Activated B cell treated with CpG ODN at 0.5 μM for 24 hours (primary cell): ENCODE measurements at regions of chrX and their contacts with region 1.

Region 1: DNA sequence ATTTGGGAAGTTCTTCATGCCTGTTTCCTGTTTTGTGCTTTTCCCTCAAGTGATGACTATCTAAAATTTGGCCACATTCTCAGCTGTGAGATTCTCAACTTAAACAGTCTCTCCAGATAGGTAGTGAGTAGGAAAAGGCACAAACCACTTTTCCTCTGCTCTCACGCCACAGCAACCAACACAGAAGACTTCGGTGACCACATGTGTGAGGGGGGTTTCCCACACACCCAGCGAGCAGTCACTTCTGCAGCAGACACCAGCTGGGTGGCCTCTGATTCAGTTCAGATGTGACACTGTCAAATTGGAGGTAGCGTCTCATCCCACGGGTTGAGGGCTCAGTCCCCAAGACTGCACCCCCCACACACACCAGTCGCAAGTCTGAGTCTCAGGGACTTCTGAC is 25.1 kb upstream of the CLDN34 start:
- DNase-seq: peak; percentile 26
- ATAC-seq: peak; percentile 84
- H3K4me3 Mint-ChIP-seq: peak overlapping the region; percentile 56
- H3K27ac Mint-ChIP-seq: peak overlapping the region; percentile 25
- H3K4me1 Mint-ChIP-seq: peaks cover 29% of the 10 kb centered on the region
- H3K27me3 Mint-ChIP-seq: no peaks in the 10 kb centered on the region
- CTCF ChIP-seq: no peak

Region 2: DNA sequence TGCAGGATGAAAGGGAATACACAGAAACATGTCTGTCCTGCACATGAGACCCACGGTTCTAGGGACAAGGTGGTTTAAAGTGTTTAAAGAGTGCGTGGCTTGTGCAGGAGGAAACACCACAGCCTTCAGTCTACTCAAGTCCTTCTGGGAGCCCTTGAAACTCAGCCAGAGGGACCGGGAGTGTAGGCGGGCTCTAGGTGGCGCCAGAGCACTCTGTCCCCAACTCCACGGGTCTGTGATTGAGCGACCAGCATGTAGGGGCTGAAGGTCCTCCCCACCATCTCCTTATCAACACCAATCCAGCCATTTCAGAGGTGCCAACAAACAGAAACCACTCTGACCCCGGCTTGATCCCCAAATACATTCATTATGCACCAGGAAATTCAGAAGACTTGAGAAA is 56.9 kb before region 1 on chrX:
- CTCF ChIA-PET with region 1: no interaction called
- POLR2A ChIA-PET with region 1: no interaction called
- intact Hi-C with region 1: loop called (anchors 5 kb)
- DNase-seq: peak; percentile 35
- ATAC-seq: peak; percentile 85
- H3K4me3 Mint-ChIP-seq: no peak overlapping the region
- H3K27ac Mint-ChIP-seq: no peak overlapping the region
- H3K4me1 Mint-ChIP-seq: peaks cover 2% of the 10 kb centered on the region
- H3K27me3 Mint-ChIP-seq: peaks cover 3% of the 10 kb centered on the region
- CTCF ChIP-seq: no peak

Region 3: DNA sequence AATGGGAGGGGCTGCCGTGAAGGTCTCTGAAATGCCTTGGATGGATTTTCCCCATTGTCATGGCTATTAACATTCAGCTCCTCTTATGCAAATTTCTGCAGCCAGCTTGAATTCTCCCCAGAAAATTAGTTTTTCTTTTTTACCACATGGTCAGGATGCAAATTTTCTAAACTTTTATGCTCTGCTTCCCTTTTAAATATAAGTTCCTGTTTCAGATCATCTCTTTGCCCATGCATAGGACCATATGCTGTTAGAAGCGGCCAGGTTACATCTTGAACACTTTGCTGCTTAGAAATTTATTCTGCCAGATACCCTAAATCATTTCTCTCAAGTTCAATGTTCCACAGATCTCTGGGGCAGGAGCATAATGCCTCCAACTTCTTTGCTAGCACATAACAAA is 11.3 kb after region 1 on chrX:
- CTCF ChIA-PET with region 1: no interaction called
- POLR2A ChIA-PET with region 1: interaction called, 3 read pairs
- intact Hi-C with region 1: loop called (anchors 1 kb)
- DNase-seq: no peak
- ATAC-seq: peak; percentile 45
- H3K4me3 Mint-ChIP-seq: no peak overlapping the region
- H3K27ac Mint-ChIP-seq: no peak overlapping the region
- H3K4me1 Mint-ChIP-seq: peaks cover 9% of the 10 kb centered on the region
- H3K27me3 Mint-ChIP-seq: no peaks in the 10 kb centered on the region
- CTCF ChIP-seq: no peak

Region 4: DNA sequence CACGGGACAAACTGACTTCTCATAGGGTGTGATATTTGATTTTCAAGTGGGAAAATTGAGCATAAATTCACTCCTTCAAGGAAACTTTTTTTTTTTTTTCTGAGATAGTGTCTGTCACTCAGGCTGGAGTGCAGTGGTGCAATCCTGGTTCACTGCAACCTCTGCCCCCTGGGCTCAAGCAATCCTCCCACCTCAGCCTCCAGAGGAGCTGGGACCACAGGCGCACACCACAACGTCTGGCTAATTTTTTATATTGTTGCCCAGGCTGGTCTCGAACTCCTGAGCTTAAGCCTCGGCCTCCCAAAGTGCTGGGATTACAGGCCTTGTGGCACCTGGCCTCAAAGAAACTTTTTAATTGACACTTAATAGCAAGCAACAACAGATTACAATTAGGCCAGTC is 38.8 kb after region 1 on chrX:
- CTCF ChIA-PET with region 1: no interaction called
- POLR2A ChIA-PET with region 1: interaction called, 6 read pairs
- intact Hi-C with region 1: loop called (anchors 2 kb)
- DNase-seq: no peak
- ATAC-seq: no peak
- H3K4me3 Mint-ChIP-seq: peak overlapping the region; percentile 24
- H3K27ac Mint-ChIP-seq: peak overlapping the region; percentile 69
- H3K4me1 Mint-ChIP-seq: peaks cover 36% of the 10 kb centered on the region
- H3K27me3 Mint-ChIP-seq: no peaks in the 10 kb centered on the region
- CTCF ChIP-seq: no peak